Ovary (tissue), 10 donors: ENCODE measurements at regions of chr6 and their contacts with region 1.

Region 1: GRCh38 chr6:144008120-144008811 is at the start of gene PLAGL1:
- DNase-seq: peak; percentile 57 to 76 (median 65)
- H3K4me3 ChIP-seq: peak within 1 kb of the TSS; percentile 61
- H3K27ac ChIP-seq: peak within 1 kb of the TSS; percentile 58 to 80
- H3K4me1 ChIP-seq: peaks cover 1% of the 10 kb centered on the region
- H3K27me3 ChIP-seq: no peaks in the 10 kb centered on the region
- CTCF ChIP-seq: no peak
- EP300 ChIP-seq: no peak
- POLR2A ChIP-seq: no peak
- total RNA-seq, gene PLAGL1: 19.0 to 53.4 (median 32.1) TPM

Region 2: GRCh38 chr6:143940011-143940597 is 68.2 kb before region 1 on chr6:
- intact Hi-C with region 1: loop called in 1 of 4 experiments (anchors 5 kb)
- DNase-seq: peak in 1 of 5 donors; percentile 47
- H3K4me3 ChIP-seq: no peak overlapping the region
- H3K27ac ChIP-seq: no peak overlapping the region
- H3K4me1 ChIP-seq: no peaks in the 10 kb centered on the region
- H3K27me3 ChIP-seq: no peaks in the 10 kb centered on the region
- CTCF ChIP-seq: peak in 1 of 3 donors; percentile 27
- EP300 ChIP-seq: no peak
- POLR2A ChIP-seq: no peak

Region 3: GRCh38 chr6:143970456-143971218 is 37.6 kb before region 1 on chr6:
- intact Hi-C with region 1: loop called in 1 of 4 experiments (anchors 5 kb)
- DNase-seq: no peak
- H3K4me3 ChIP-seq: no peak overlapping the region
- H3K27ac ChIP-seq: peak overlapping the region in 1 of 2 donors; percentile 47
- H3K4me1 ChIP-seq: peaks cover 3% of the 10 kb centered on the region
- H3K27me3 ChIP-seq: no peaks in the 10 kb centered on the region
- CTCF ChIP-seq: no peak
- EP300 ChIP-seq: no peak
- POLR2A ChIP-seq: no peak